ENCODE measurements at regions of chr11 and their contacts with region 1.

Region 1: DNA sequence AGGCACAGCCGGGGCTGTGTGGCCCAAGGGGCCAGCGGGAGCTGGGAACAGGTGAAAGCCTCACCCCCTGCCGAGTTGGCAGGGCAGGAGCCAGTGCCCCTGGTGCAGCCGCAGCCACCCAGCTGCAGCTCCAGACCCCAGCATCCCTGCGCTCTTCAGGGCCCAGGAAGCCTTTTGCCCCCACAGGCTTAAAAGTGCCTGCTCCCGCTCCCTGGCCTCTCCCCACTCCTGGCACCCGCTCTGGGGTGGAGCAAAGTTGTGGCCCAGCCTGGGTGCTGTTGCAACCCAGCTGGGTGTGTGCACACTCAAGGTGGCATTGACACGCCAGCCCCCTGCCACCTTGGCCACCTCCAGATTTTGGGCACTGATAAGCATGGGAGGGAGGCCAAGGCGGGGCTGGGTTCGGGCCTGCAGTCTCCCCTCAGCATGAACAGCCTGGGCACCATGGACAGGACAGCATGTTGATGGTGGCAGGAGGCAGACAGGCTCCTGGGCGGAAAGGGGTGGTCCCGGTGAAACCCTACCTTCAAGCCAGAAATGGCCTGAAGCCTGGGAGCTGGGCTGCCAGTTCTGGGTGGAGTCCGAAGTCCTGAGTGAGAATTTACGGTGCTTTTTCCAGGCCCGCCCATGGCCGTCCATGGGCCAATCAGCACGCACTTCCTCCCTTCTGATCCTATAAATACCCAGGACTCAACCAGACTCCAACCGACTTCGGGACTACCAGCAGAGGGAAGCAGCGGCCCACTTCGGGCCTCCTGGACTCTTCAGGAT is 23.5 kb upstream of the RNASEH2C start:
- DNase-seq: peak; percentile 71
- ATAC-seq: peak; percentile 99
- H3K4me3 Mint-ChIP-seq: no peak overlapping the region
- H3K27ac Mint-ChIP-seq: no peak overlapping the region
- H3K4me1 Mint-ChIP-seq: no peaks in the 10 kb centered on the region
- H3K27me3 Mint-ChIP-seq: peaks cover 38% of the 10 kb centered on the region
- CTCF ChIP-seq: no peak

Region 2: DNA sequence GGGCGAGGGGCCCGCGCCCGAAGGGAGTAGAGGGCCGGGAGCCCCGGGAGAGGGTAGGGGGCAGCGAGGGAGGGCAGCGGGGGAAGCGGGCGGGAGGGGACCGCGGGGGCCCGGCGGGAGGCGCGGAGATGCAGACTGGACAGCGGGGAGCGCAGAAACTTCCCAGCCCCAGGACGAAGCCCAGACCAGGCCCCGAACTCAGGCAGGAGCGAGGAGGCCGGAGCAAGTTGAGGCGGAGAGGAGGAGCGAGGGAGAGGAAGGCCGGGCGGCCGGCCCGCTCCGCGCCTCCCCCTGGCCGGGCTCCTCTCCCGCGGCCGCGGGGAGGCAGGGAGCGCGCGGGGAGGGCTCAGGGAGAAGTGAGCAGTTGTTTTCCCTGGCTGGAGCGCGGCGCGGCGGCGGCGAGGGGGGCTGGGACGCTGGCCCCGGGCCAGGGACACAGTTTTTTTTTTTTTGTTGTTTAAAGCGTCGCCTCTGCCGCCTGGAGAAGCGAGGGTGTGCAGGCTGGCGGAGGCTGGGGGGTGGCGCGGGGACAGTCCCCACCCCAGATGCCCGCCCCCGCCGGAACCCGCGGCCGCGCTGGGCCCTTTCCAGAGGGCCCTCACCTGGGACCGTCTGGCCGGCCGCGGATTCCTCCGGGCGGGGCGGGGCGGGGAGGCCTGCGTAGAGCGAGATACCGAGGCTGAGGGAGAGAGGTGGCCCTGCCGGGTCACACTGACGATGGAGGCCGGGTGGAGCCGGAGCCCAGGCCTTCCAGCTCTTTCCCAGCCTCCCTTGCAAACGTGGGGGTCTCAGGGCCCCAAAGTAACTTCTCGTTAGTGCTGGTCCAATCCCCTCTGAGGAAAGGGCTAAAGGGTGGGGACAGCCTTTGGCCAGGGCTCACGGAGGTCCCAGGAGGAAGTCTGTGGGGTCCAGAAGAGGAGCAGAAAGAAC is 185.8 kb before region 1 on chr11 and contains the start of gene LTBP3:
- CTCF ChIA-PET with region 1: no interaction called
- POLR2A ChIA-PET with region 1: no interaction called
- DNase-seq: peak; percentile 60
- ATAC-seq: peak; percentile 32
- H3K4me3 Mint-ChIP-seq: peak within 1 kb of the TSS; percentile 69
- H3K27ac Mint-ChIP-seq: peak within 1 kb of the TSS; percentile 33; the same call in 1 of the 2 replicates
- H3K4me1 Mint-ChIP-seq: peaks cover 50% of the 10 kb centered on the region
- H3K27me3 Mint-ChIP-seq: peaks cover 62% of the 10 kb centered on the region
- CTCF ChIP-seq: no peak
- total RNA-seq, gene LTBP3: 15.9 to 23.6 TPM (median 20.7 TPM) in 3 replicates

Region 3: DNA sequence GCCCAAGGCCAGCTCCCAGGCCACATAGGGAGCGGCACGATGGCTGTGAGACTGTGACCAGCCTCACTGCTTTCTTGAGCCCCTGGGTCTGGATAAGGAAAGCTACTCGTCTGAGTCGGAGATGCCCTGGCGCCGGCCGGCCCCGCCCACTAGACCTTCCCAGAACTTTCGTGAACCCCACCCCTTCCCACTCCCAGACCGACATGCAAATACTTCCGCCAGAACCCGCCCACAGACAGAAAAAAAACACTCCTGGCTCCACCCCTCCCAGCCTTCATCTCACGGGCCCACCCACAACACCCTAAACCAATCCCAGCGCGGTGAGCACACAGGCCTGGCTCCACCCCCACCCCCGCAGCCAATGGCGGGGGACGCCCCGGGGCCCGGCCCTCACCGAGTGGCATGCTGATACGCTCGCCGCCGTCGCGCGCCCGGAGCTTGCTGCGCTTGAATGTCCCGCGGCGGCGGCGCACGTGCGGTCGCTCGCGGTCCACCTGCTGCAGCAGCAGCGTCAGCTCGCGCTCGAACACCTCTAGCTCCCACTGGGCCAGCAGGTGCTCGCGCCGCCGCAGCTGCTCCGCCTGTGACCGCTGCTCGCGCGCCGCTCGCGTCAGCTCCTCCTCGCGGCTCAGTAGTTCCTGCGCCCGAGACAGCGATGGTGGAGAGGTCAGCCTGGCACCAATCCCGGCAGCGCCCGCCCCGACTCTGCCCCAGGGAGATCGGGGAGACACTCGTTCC is 137.1 kb before region 1 on chr11:
- CTCF ChIA-PET with region 1: no interaction called
- POLR2A ChIA-PET with region 1: no interaction called
- DNase-seq: peak; percentile 97
- ATAC-seq: peak; percentile 98
- H3K4me3 Mint-ChIP-seq: peak overlapping the region; percentile 70
- H3K27ac Mint-ChIP-seq: peak overlapping the region; percentile 65; the same call in 1 of the 2 replicates
- H3K4me1 Mint-ChIP-seq: peaks cover 18% of the 10 kb centered on the region
- H3K27me3 Mint-ChIP-seq: peaks cover 8% of the 10 kb centered on the region; the same call in 1 of the 2 replicates
- CTCF ChIP-seq: no peak

Region 4: DNA sequence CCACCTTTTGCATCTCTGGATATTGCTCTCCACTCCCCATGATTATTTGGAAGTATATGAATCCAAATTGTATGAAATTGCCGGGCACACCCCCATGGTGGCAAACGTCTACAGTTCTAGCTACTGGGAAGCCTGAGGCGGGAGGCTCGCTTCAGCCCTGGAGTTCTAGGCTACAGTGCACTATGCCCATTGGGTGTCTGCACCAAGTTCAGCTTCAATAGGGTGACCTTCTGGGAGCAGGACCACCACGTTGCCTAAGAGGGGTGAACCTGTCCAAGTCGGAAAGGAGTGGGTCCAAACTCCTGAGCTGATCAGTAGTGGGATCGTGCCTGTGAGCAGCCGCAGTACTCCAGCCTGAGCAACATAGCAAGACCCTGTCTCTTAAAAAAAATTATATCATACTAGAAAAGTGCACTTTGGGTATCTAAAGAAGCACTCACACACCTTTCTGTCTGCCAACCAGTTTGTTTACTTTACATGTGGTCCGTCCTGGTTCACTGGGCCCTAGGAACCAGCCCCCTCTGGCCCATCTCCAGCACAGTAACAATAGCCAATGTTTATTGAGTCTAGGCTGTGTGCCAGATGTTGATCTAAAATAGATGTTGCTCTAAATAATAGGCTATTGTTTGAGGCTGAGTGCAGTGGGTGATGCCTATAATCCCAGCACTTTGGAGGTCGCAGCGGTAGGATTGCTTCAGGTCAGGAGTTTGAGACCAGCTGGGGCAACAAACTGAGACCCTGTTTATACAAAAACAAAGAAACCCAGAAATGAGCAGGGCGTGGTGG is 48.5 kb before region 1 on chr11:
- CTCF ChIA-PET with region 1: no interaction called
- POLR2A ChIA-PET with region 1: no interaction called
- DNase-seq: no peak
- ATAC-seq: no peak
- H3K4me3 Mint-ChIP-seq: no peak overlapping the region
- H3K27ac Mint-ChIP-seq: no peak overlapping the region
- H3K4me1 Mint-ChIP-seq: peaks cover 3% of the 10 kb centered on the region; the same call in 1 of the 2 replicates
- H3K27me3 Mint-ChIP-seq: peaks cover 12% of the 10 kb centered on the region
- CTCF ChIP-seq: no peak

Region 5: DNA sequence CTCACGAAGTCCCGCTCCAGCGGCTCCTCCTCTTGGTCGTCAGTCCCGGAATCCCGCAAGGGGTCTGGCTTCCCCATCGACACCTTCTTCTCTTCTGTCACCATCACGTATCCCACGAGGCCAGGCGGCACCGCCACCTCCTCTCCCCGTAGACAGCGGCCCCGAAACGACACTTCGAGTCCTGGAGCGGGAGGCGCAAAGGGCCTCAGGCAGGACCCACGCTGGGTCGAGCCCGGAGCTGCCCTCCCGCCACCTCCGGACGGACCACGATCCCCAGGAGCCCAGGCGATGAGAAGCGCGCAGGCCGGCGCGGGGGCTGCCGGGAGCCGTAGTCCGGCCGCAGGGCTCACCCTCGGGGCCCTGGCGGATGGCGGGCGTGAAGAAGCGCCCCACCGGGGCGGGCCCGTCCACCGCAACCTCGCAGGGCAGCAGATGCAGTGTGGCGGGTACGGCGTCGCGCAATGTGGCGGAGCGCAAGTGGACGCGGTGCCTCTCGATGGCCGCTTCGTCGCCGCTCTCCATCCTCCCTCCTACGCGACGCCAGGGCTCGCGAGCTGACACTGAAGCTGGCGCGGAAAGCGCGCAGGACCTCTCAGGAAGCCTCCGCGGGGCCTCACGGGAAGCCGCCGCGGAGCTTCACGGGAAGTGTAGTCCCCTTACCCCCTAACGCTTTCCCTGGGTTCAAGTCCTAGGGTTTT is 23.7 kb before region 1 on chr11 and contains the start of gene RNASEH2C:
- CTCF ChIA-PET with region 1: interaction called, 11 read pairs
- POLR2A ChIA-PET with region 1: no interaction called
- DNase-seq: peak; percentile 82
- ATAC-seq: peak; percentile 87
- H3K4me3 Mint-ChIP-seq: peak within 1 kb of the TSS; percentile 98
- H3K27ac Mint-ChIP-seq: peak within 1 kb of the TSS; percentile 63; the same call in 1 of the 2 replicates
- H3K4me1 Mint-ChIP-seq: peaks cover 9% of the 10 kb centered on the region
- H3K27me3 Mint-ChIP-seq: peaks cover 4% of the 10 kb centered on the region; the same call in 1 of the 2 replicates
- CTCF ChIP-seq: no peak
- total RNA-seq, gene RNASEH2C: 42.1 to 53.0 TPM (median 52.2 TPM) in 3 replicates

Region 6: GRCh38 chr11:65770856-65771540 is 26.9 kb after region 1 on chr11:
- CTCF ChIA-PET with region 1: interaction called, 21 read pairs
- POLR2A ChIA-PET with region 1: no interaction called
- DNase-seq: no peak
- ATAC-seq: no peak
- H3K4me3 Mint-ChIP-seq: no peak overlapping the region
- H3K27ac Mint-ChIP-seq: peak overlapping the region; percentile 32; the same call in 1 of the 2 replicates
- H3K4me1 Mint-ChIP-seq: no peaks in the 10 kb centered on the region
- H3K27me3 Mint-ChIP-seq: 0 out of 2 replicates have a peak, but pooled peaks cover 4% of the 10 kb centered on the region
- CTCF ChIP-seq: no peak

Region 7: DNA sequence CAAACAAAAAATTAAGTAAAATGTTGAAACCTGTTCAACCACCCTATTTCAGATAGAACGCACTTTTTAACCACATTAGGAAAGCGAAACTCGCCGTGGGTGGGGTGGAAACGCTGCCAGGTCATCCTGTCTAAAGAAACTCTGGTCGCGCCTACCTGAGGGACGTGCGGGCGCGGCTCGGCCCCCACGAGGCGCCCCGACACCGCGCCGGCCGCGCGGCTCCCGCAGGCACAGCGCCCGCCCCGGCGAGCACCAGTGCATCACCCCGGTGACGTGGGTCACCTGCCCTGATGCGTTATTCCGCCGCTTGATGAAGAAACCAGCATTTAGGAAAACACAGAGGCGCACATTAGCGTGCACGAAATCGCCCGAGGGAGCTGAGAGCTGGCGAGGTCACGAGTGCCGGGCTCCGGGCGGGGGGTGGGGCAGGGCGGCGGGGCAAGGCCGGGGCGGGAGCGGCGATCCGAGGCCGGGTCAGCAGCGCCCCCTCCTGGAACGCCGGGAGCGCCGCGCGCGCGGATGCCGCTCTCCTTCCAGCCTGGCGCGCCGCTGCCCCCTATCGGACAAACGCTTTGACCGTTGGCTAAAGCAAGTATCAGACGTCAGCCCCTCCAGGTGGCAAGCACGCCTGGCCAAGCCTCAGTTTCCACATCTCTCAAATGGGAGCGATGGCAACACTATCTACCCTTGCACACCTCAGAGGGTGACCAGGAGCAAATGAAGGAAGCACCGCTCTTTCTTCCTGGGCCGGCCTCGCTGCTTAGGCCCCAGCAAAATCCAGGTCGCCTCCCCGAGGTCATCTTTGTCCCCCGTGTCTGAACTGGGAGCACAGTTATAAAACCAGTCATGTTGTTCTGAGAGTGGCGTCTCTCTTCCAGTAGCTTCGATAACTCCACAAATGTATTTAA is 74.0 kb after region 1 on chr11:
- CTCF ChIA-PET with region 1: interaction called, 22 read pairs
- POLR2A ChIA-PET with region 1: no interaction called
- DNase-seq: peak; percentile 96
- ATAC-seq: peak; percentile 87
- H3K4me3 Mint-ChIP-seq: peak overlapping the region; percentile 72
- H3K27ac Mint-ChIP-seq: no peak overlapping the region
- H3K4me1 Mint-ChIP-seq: 0 out of 2 replicates have a peak, but pooled peaks cover 5% of the 10 kb centered on the region
- H3K27me3 Mint-ChIP-seq: peaks cover 15% of the 10 kb centered on the region
- CTCF ChIP-seq: peak; percentile 100